ENCODE measurements at regions of chr1 and their contacts with region 1.

Region 1: GRCh38 chr1:185813401-185813979 is 79.3 kb downstream of the HMCN1 start:
- DNase-seq: peak; percentile 85
- H3K4me3 ChIP-seq: no peak overlapping the region
- H3K27ac ChIP-seq: peak overlapping the region; percentile 29
- H3K4me1 ChIP-seq: peaks cover 73% of the 10 kb centered on the region
- H3K27me3 ChIP-seq: no peaks in the 10 kb centered on the region
- CTCF ChIP-seq: peak; percentile 86

Region 2: DNA sequence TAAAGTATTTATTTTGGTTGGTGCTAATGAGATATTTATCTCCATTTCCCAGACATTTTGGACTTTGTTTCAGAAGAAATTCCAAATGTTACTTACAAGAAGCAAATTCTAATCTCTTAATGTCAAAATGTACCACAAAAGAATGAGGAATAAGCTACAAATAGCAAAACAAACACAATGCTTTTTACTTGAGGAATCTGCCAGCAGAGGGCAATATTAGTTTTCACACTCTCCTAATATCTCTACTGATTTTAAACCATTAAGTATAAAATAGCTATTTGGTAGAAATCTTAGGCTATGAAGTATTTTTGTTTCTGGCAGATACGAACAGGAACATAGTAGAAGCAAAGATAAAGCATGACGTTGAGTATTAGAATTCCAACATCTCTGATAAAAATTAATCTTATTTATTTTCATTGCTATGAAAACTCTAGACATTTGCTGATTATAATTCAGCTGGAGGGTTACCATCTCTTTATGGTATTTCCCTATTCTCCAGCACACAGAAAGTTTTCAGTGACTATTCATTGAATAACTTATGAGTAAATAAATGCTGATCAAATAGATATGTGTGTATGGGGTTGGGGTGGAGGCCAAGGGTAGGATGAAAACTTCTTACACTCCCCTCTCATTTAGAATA is 92.7 kb before region 1 on chr1:
- CTCF ChIA-PET with region 1: no interaction called
- POLR2A ChIA-PET with region 1: no interaction called
- intact Hi-C with region 1: no loop called
- DNase-seq: peak; percentile 88
- H3K4me3 ChIP-seq: no peak overlapping the region
- H3K27ac ChIP-seq: peak overlapping the region; percentile 100
- H3K4me1 ChIP-seq: peaks cover 64% of the 10 kb centered on the region
- H3K27me3 ChIP-seq: no peaks in the 10 kb centered on the region
- CTCF ChIP-seq: peak; percentile 81

Region 3: DNA sequence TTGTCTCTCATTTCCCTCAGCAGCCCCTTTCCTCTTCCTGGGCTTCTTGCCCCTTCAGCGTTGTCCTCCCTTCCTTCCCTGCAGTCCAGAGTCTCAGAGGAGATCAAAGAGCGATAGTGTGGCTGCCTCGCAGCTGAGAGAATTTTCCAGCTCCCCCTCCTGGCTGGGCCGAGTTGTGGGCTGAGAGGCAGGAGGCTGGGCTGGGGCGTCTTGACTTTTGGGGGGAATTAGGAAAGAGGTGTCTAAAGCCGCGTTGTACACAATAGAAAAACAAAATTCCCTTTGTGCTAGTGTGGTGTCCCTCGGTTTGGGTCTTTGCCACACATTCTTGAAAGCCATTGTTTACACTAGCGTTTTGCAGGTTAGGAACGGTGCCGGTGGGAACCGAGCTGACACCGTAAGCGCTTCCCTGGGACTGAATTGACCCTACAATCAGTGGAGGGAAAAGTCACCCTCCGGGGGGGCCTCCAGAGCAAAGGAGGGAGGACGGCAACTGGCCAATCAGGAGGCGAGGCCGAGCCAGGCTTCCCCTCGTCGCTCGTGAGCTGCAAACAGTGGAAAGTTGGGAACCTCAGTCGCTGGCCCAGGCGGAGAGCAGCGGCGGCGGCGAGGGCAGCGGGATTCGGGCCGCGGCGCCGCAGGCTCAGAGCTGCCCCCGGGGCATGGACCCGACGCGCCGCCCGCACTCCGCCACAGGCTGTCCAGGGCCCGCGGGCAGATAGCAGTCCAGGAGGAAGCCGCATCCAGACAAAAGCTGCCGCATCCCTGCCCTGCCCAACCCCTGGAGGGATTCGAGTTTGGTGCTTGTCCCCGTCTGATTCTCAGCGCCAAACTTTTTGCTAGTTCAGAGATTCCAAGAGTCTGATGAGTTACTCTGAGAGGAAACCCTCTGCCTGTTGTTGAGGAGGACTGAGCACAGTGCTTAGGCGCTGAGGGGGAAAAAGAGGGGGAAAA is 79.4 kb before region 1 on chr1 and contains the start of gene HMCN1:
- CTCF ChIA-PET with region 1: no interaction called
- POLR2A ChIA-PET with region 1: no interaction called
- intact Hi-C with region 1: loop called (anchors 5 kb)
- DNase-seq: peak; percentile 94
- H3K4me3 ChIP-seq: peak within 1 kb of the TSS; percentile 72
- H3K27ac ChIP-seq: peak within 1 kb of the TSS; percentile 88
- H3K4me1 ChIP-seq: peaks cover 24% of the 10 kb centered on the region
- H3K27me3 ChIP-seq: no peaks in the 10 kb centered on the region
- CTCF ChIP-seq: peak; percentile 60
- total RNA-seq, gene HMCN1: 134 and 182 TPM in 2 replicates

Region 4: GRCh38 chr1:186059777-186060176 is 246.3 kb after region 1 on chr1:
- CTCF ChIA-PET with region 1: no interaction called
- POLR2A ChIA-PET with region 1: no interaction called
- intact Hi-C with region 1: loop called (anchors 10 kb)
- DNase-seq: no peak
- H3K4me3 ChIP-seq: no peak overlapping the region
- H3K27ac ChIP-seq: peak overlapping the region; percentile 12
- H3K4me1 ChIP-seq: peaks cover 69% of the 10 kb centered on the region
- H3K27me3 ChIP-seq: no peaks in the 10 kb centered on the region
- CTCF ChIP-seq: no peak

Measured in A673 (cell line).